Caco-2 (cell line): ENCODE measurements at regions of chr3 and their contacts with region 1.

Region 1: DNA sequence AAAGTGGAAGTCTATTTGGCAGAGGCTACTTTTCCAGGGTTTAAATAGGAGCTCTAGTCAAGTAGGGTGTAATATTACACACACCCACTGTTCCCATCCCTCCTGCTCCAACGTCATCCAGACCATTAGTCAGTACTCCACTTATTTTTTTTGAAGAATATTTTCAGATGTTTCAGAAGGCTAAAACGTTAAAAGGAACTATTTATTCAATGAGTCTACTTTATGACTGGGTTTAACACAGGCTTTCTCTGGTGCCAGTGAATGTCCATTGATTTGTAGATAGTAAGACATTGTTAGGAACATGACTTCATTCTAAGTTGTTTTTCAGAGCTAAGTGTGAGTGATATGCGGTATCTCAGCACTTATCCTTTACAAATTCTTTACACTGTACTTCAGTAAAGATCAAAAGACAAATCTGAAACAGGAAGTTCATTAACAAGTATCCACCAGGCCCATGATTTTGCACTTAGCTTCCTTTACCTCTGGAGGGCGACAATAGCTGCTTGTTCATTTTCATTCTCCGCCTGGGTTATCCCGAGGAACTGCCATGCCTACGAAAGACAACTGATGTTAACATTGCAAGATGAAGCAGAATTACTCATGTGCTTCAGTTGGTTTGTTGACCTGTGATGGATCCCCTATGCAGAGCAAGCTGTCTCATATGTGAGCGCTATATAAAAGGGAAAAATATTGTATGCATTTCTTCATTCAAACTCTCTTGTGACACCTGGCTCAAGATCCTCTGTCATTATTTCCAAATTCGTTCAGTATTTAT is 158.7 kb downstream of the USP13 start:
- DNase-seq: peak; percentile 46 to 63
- H3K4me3 ChIP-seq: no peak overlapping the region
- H3K4me3 Mint-ChIP-seq: no peak overlapping the region
- H3K27ac Mint-ChIP-seq: peak overlapping the region; percentile 42
- H3K4me1 ChIP-seq: no peaks in the 10 kb centered on the region
- H3K4me1 Mint-ChIP-seq: no peaks in the 10 kb centered on the region
- H3K27me3 ChIP-seq: no peaks in the 10 kb centered on the region
- H3K27me3 Mint-ChIP-seq: no peaks in the 10 kb centered on the region
- CTCF ChIP-seq: peak; percentile 63 to 71

Region 2: DNA sequence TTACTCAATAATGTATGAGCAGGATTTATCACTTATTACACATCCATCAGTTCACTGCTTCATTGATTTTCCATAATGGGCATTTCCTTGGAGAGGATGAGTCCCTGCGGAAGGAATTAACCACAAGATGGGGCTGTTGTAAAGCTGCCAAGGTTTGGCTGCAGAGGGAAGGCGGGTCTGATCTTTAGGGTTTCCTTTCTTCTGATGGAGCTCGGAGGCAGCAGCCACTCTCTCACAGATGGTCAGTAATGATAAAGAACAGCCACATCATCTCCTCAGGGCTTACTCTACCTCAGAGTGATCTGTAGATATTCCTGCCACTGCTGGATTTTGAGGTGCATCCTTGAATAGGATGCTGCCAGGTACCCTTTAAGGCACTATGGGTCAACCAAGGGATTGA is 43.4 kb before region 1 on chr3:
- CTCF ChIA-PET with region 1: interaction called, 8 read pairs
- POLR2A ChIA-PET with region 1: no interaction called
- intact Hi-C with region 1: loop called (anchors 5 kb)
- DNase-seq: peak; percentile 45 to 63
- H3K4me3 ChIP-seq: no peak overlapping the region
- H3K4me3 Mint-ChIP-seq: no peak overlapping the region
- H3K27ac Mint-ChIP-seq: no peak overlapping the region
- H3K4me1 ChIP-seq: no peaks in the 10 kb centered on the region
- H3K4me1 Mint-ChIP-seq: no peaks in the 10 kb centered on the region
- H3K27me3 ChIP-seq: no peaks in the 10 kb centered on the region
- H3K27me3 Mint-ChIP-seq: no peaks in the 10 kb centered on the region
- CTCF ChIP-seq: peak; percentile 34 to 65

Region 3: DNA sequence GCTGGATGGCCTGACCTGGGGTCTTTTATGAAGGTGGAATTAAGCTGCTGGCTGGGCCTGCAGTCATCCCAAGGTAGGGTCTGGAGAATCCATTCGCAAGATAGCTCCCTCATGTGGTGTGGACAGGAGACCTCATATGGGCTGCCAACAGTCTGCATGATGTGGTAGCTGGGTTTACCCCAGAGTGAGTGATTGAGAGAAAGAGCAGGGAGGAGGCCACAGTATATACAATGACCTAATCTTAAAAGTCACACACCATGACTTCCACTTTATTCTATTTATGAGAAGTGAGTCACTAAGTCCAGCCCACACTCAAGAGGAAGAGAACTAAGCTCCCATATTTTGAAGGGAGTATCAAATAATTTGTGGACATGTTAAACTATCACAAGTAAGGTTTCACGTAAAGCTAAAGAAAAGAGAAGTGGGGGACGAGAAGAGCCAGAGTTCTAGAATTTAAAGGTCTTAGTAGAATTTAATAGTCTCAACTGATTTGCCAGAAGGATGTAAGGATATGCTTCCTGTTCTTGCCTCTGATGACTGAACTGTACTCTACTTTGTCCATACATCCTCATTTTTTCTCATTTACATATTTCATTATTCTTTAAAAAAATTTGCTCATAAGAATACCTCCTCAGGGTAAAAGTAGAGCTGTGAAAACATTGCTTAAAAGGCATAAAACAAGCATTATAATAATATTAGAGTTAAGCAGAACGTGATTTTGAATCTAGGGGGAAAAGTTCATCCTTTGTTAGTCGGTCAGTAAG is 40.8 kb after region 1 on chr3:
- CTCF ChIA-PET with region 1: interaction called, 9 read pairs
- POLR2A ChIA-PET with region 1: no interaction called
- intact Hi-C with region 1: loop called (anchors 2 kb)
- DNase-seq: peak in 1 of 2 experiments; percentile 7
- H3K4me3 ChIP-seq: no peak overlapping the region
- H3K4me3 Mint-ChIP-seq: no peak overlapping the region
- H3K27ac Mint-ChIP-seq: no peak overlapping the region
- H3K4me1 ChIP-seq: no peaks in the 10 kb centered on the region
- H3K4me1 Mint-ChIP-seq: no peaks in the 10 kb centered on the region
- H3K27me3 ChIP-seq: no peaks in the 10 kb centered on the region
- H3K27me3 Mint-ChIP-seq: peaks cover 7% of the 10 kb centered on the region
- CTCF ChIP-seq: peak in 1 of 2 experiments; percentile 33

Region 4: DNA sequence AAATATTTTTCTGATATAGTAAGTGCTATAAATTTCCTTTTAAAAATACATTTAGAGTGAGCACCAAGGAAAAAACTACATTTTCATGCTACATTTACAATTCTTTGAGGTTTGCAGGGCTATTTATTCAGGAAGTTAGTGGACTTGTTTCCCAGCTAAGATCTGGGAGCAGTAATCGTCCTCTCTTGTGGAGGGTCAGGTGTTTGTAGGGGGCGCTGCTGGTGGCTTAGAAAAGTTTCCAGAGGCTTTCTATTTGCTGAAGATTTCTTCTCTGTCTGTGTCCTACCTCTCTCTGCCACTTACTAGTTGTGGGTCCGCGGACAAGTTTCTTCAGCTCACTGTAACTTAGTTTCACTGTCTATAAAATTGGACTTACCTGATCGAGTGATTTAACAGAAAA is 61.3 kb after region 1 on chr3:
- CTCF ChIA-PET with region 1: no interaction called
- POLR2A ChIA-PET with region 1: no interaction called
- intact Hi-C with region 1: no loop called
- DNase-seq: no peak
- H3K4me3 ChIP-seq: no peak overlapping the region
- H3K4me3 Mint-ChIP-seq: no peak overlapping the region
- H3K27ac Mint-ChIP-seq: no peak overlapping the region
- H3K4me1 ChIP-seq: no peaks in the 10 kb centered on the region
- H3K4me1 Mint-ChIP-seq: no peaks in the 10 kb centered on the region
- H3K27me3 ChIP-seq: no peaks in the 10 kb centered on the region
- H3K27me3 Mint-ChIP-seq: peaks cover 7% of the 10 kb centered on the region
- CTCF ChIP-seq: no peak

Region 5: GRCh38 chr3:180085122-180085710 is 273.7 kb after region 1 on chr3:
- CTCF ChIA-PET with region 1: no interaction called
- POLR2A ChIA-PET with region 1: no interaction called
- intact Hi-C with region 1: loop called (anchors 2 kb)
- DNase-seq: no peak
- H3K4me3 ChIP-seq: no peak overlapping the region
- H3K4me3 Mint-ChIP-seq: no peak overlapping the region
- H3K27ac Mint-ChIP-seq: no peak overlapping the region
- H3K4me1 ChIP-seq: no peaks in the 10 kb centered on the region
- H3K4me1 Mint-ChIP-seq: no peaks in the 10 kb centered on the region
- H3K27me3 ChIP-seq: no peaks in the 10 kb centered on the region
- H3K27me3 Mint-ChIP-seq: peaks cover 9% of the 10 kb centered on the region
- CTCF ChIP-seq: peak in 1 of 2 experiments; percentile 6